ENCODE measurements at regions of chr1 and their contacts with region 1.

Region 1: GRCh38 chr1:178189814-178190213 is 95.9 kb downstream of the RASAL2 start:
- DNase-seq: peak; percentile 48
- H3K4me3 ChIP-seq: no peak overlapping the region
- H3K27ac ChIP-seq: no peak overlapping the region
- H3K4me1 ChIP-seq: peaks cover 26% of the 10 kb centered on the region
- H3K27me3 ChIP-seq: no peaks in the 10 kb centered on the region
- CTCF ChIP-seq: peak; percentile 34 to 41
- POLR2A ChIP-seq: no peak

Region 2: DNA sequence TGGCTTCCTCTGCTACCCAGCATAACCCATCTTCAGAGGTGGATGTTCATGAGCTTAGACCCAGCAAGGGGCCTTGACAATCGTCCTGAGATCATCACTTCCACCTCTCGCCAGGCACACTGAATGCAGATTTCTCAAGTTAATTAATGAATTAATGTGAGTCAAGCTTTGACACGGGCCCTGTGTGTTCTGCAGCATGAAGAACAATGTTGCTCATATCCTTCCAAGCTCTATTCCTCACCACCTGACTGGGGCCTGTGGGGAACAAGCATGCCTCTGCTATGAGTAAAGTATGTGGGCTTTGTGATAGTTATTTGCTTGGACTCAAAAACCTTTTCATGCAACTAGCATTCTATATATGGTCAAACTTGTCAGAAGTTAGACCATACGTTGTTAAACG is 342.0 kb before region 1 on chr1:
- CTCF ChIA-PET with region 1: no interaction called
- POLR2A ChIA-PET with region 1: no interaction called
- dilution Hi-C with region 1: no loop called
- intact Hi-C with region 1: no loop called
- DNase-seq: no peak
- H3K4me3 ChIP-seq: no peak overlapping the region
- H3K27ac ChIP-seq: no peak overlapping the region
- H3K4me1 ChIP-seq: no peaks in the 10 kb centered on the region
- H3K27me3 ChIP-seq: no peaks in the 10 kb centered on the region
- CTCF ChIP-seq: no peak
- POLR2A ChIP-seq: no peak

Region 3: GRCh38 chr1:177937931-177938330 is 251.9 kb before region 1 on chr1:
- CTCF ChIA-PET with region 1: no interaction called
- POLR2A ChIA-PET with region 1: no interaction called
- dilution Hi-C with region 1: no loop called
- intact Hi-C with region 1: no loop called
- DNase-seq: no peak
- H3K4me3 ChIP-seq: no peak overlapping the region
- H3K27ac ChIP-seq: no peak overlapping the region
- H3K4me1 ChIP-seq: peaks cover 7% of the 10 kb centered on the region
- H3K27me3 ChIP-seq: no peaks in the 10 kb centered on the region
- CTCF ChIP-seq: no peak
- POLR2A ChIP-seq: no peak

Region 4: GRCh38 chr1:178037503-178038253 is 152.1 kb before region 1 on chr1:
- CTCF ChIA-PET with region 1: interaction called, 3 read pairs
- POLR2A ChIA-PET with region 1: interaction called, 3 read pairs
- dilution Hi-C with region 1: no loop called
- intact Hi-C with region 1: loop called (anchors 1 kb)
- DNase-seq: peak; percentile 76
- H3K4me3 ChIP-seq: peak overlapping the region; percentile 45 to 51 (median 48)
- H3K27ac ChIP-seq: peak overlapping the region; percentile 41
- H3K4me1 ChIP-seq: no peaks in the 10 kb centered on the region
- H3K27me3 ChIP-seq: no peaks in the 10 kb centered on the region
- CTCF ChIP-seq: peak; percentile 26 to 42
- POLR2A ChIP-seq: peak; percentile 66

Region 5: DNA sequence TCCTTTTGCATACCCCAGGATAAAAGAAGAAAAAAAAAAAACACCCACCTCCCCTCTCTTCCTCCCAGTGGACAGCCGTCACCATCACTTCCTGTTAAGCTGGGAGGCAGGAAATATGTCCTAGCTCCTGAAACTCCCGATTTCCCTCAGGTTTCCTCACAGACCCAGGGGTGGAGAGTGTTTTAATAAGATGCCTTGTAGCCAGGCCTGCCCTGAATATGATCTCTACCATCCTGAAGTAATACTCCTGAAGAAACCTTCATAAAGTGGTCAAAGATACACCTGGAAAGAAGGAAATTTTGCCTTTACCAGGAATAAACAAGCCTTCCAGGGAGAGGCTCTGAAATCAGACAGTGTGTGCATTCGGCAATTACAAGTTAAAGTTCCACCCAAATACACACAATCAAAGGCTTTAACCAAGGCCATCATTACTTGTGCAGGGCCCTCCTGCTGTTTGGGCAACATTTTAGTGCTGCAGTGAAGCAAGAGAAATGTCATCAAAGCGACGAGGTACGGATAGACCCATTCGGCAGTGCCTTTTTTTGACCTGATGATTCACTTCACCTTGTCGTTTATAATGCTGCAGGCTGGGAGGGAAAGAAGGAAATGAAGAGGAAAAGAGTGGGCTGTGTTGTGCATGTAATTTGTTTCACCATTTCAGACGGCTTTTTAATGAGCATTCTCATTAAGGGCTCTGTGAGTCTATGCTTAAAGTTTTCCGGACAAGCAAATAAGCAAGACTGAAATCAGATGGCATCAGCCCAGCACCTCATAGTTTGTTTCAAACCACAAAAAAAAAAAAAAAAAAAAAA is 137.0 kb before region 1 on chr1:
- CTCF ChIA-PET with region 1: no interaction called
- POLR2A ChIA-PET with region 1: no interaction called
- dilution Hi-C with region 1: no loop called
- intact Hi-C with region 1: loop called (anchors 5 kb)
- DNase-seq: peak; percentile 48
- H3K4me3 ChIP-seq: no peak overlapping the region
- H3K27ac ChIP-seq: peak overlapping the region; percentile 66
- H3K4me1 ChIP-seq: peaks cover 43% of the 10 kb centered on the region
- H3K27me3 ChIP-seq: no peaks in the 10 kb centered on the region
- CTCF ChIP-seq: no peak
- POLR2A ChIP-seq: no peak

Region 6: GRCh38 chr1:178238722-178239510 is 49.1 kb after region 1 on chr1:
- CTCF ChIA-PET with region 1: interaction called, 4 read pairs
- POLR2A ChIA-PET with region 1: no interaction called
- dilution Hi-C with region 1: no loop called
- intact Hi-C with region 1: loop called (anchors 2 kb)
- DNase-seq: peak; percentile 72
- H3K4me3 ChIP-seq: no peak overlapping the region
- H3K27ac ChIP-seq: peak overlapping the region; percentile 53
- H3K4me1 ChIP-seq: peaks cover 36% of the 10 kb centered on the region
- H3K27me3 ChIP-seq: no peaks in the 10 kb centered on the region
- CTCF ChIP-seq: no peak
- POLR2A ChIP-seq: no peak

Region 7: DNA sequence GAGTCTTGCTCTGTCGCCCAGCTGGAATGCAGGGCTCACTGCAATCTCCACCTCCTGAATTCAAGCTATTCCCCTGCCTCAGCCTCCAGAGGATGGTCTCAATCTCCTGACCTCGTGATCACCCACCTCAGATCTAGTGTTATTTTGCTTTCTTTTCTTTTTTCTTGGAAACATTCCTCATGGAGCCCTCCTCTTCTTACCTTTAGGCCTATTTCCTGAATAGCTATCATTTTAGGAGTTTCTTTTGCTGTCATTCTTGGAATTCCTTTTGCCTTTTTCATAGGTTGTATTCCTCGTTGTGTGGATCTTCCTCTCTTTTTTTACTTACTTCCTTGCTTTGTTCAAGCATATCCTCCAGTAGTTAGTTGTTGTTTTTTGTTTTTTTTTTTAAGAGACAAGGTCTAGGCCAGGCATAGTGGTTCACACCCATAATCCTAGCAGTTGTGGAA is 77.9 kb after region 1 on chr1:
- CTCF ChIA-PET with region 1: no interaction called
- POLR2A ChIA-PET with region 1: no interaction called
- dilution Hi-C with region 1: no loop called
- intact Hi-C with region 1: loop called (anchors 2 kb)
- DNase-seq: peak; percentile 76
- H3K4me3 ChIP-seq: peak overlapping the region in 1 of 3 experiments; percentile 7
- H3K27ac ChIP-seq: peak overlapping the region; percentile 64
- H3K4me1 ChIP-seq: peaks cover 22% of the 10 kb centered on the region
- H3K27me3 ChIP-seq: no peaks in the 10 kb centered on the region
- CTCF ChIP-seq: no peak
- POLR2A ChIP-seq: no peak

Region 8: GRCh38 chr1:178282949-178283367 is 93.1 kb after region 1 on chr1:
- CTCF ChIA-PET with region 1: interaction called, 6 read pairs
- POLR2A ChIA-PET with region 1: no interaction called
- dilution Hi-C with region 1: no loop called
- intact Hi-C with region 1: loop called (anchors 1 kb)
- DNase-seq: peak; percentile 69
- H3K4me3 ChIP-seq: no peak overlapping the region
- H3K27ac ChIP-seq: no peak overlapping the region
- H3K4me1 ChIP-seq: no peaks in the 10 kb centered on the region
- H3K27me3 ChIP-seq: no peaks in the 10 kb centered on the region
- CTCF ChIP-seq: peak; percentile 28 to 34
- POLR2A ChIP-seq: no peak

Measured in endothelial cell of umbilical vein (primary cell).